ENCODE measurements at regions of chr11 and their contacts with region 1.

Region 1: GRCh38 chr11:60944490-60945294 is 7.3 kb downstream of the SLC15A3 start:
- DNase-seq: peak in 2 of 14 experiments; percentile 45 to 48
- ATAC-seq: no peak
- H3K4me3 ChIP-seq: no peak overlapping the region
- H3K4me3 Mint-ChIP-seq: no peak overlapping the region
- H3K27ac ChIP-seq: no peak overlapping the region
- H3K27ac Mint-ChIP-seq: peak overlapping the region; percentile 17
- H3K4me1 ChIP-seq: no peaks in the 10 kb centered on the region
- H3K4me1 Mint-ChIP-seq: no peaks in the 10 kb centered on the region
- H3K27me3 ChIP-seq: peaks cover 0 to 4% of the 10 kb centered on the region in 2 experiments
- H3K27me3 Mint-ChIP-seq: no peaks in the 10 kb centered on the region
- CTCF ChIP-seq: peak; percentile 24

Region 2: GRCh38 chr11:60594998-60595642 is 349.6 kb before region 1 on chr11:
- CTCF ChIA-PET with region 1: no interaction called
- POLR2A ChIA-PET with region 1: no interaction called
- intact Hi-C with region 1: no loop called
- DNase-seq: no peak
- ATAC-seq: no peak
- H3K4me3 ChIP-seq: no peak overlapping the region
- H3K4me3 Mint-ChIP-seq: no peak overlapping the region
- H3K27ac ChIP-seq: no peak overlapping the region
- H3K27ac Mint-ChIP-seq: no peak overlapping the region
- H3K4me1 ChIP-seq: no peaks in the 10 kb centered on the region
- H3K4me1 Mint-ChIP-seq: no peaks in the 10 kb centered on the region
- H3K27me3 ChIP-seq: no peaks in the 10 kb centered on the region
- H3K27me3 Mint-ChIP-seq: no peaks in the 10 kb centered on the region
- CTCF ChIP-seq: no peak

Region 3: DNA sequence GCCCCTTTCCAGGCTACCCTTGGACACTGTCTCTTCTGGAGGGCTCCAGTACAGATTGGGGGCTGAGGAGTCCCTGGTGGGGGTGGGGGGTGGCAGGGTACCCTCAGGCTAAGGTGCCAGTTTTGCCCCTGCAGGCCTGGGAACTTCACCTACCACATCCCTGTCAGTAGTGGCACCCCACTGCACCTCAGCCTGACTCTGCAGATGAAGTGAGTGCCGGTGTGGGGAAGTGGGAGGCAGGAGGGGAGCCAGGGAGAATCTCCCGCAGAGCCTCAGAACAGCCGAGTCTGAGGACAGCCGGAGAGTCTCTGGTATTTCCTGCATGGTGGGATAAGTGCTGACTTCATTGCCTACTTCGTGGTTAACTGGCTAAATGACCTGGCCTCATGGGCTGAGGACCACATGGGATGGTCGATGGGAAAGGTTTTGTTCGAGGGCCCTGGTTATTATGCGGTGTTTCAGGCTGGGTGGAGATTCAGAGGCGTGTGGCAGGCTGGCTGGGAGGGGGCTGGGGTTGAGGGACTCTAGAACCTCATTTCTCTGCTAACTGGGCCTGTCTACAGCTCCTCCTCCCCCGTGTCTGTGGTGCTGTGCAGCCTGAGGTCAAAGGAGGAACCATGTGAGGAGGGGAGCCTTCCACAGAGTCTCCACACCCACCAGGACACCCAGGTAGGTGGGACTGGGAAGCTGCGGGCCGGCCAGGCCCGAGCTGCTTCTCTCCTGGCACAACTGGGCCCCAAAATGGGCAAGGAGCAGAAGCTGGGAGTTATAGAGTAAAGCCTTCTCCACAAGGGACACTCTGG is 839.2 kb after region 1 on chr11:
- CTCF ChIA-PET with region 1: no interaction called
- POLR2A ChIA-PET with region 1: no interaction called
- intact Hi-C with region 1: loop called in 1 of 2 experiments (anchors 5 kb)
- DNase-seq: no peak
- ATAC-seq: no peak
- H3K4me3 ChIP-seq: no peak overlapping the region
- H3K4me3 Mint-ChIP-seq: no peak overlapping the region
- H3K27ac ChIP-seq: no peak overlapping the region
- H3K27ac Mint-ChIP-seq: no peak overlapping the region
- H3K4me1 ChIP-seq: peaks cover 3% of the 10 kb centered on the region
- H3K4me1 Mint-ChIP-seq: no peaks in the 10 kb centered on the region
- H3K27me3 ChIP-seq: no peaks in the 10 kb centered on the region
- H3K27me3 Mint-ChIP-seq: no peaks in the 10 kb centered on the region
- CTCF ChIP-seq: no peak

Measured in CD4-positive, alpha-beta T cell (primary cell).